ENCODE measurements at regions of chr6 and their contacts with region 1.

Region 1: DNA sequence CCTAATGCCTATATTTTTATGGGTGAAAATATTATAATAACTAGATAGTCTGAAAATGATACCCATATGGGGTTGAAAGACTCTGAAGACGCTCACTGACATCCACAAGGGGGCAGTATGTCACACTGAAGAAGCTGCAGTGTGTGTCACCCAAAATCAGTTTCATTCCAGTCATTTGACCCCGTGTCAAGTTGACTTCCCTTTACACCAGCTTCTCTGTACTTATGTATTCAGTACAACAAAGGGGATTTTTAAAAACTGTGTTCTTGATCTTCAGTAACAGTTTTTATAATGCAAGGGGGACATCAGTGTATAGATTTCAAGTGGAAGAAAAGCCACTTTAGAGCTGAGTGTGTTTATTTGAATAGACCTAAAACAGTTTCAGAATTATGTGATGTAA is 19.3 kb downstream of the FAXC start:
- DNase-seq: peak; percentile 84
- H3K4me3 Mint-ChIP-seq: no peak overlapping the region
- H3K27ac Mint-ChIP-seq: no peak overlapping the region
- H3K4me1 Mint-ChIP-seq: peaks cover 4% of the 10 kb centered on the region
- H3K27me3 Mint-ChIP-seq: peaks cover 7% of the 10 kb centered on the region

Region 2: DNA sequence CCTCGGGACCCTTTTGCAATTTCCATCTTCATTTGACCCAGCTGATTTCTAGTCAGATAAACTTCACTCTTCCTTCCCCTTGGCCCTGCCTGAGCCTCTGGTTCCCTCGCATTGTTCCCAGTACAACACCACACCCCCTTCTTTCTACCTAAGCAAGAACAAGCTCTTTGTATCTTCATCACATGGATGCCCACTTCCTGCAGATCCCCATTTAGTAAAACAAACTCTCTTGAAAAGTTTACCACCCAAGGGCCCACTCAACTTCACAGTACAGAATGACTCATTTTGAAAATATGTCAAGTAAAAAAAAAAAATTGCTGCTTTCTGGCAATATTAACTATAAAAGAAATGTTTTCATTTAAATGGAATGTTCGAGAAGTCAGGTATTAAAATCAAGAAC is 14.1 kb after region 1 on chr6:
- CTCF ChIA-PET with region 1: interaction called, 10 read pairs
- intact Hi-C with region 1: no loop called
- DNase-seq: no peak
- H3K4me3 Mint-ChIP-seq: no peak overlapping the region
- H3K27ac Mint-ChIP-seq: no peak overlapping the region
- H3K4me1 Mint-ChIP-seq: peaks cover 3% of the 10 kb centered on the region
- H3K27me3 Mint-ChIP-seq: peaks cover 36% of the 10 kb centered on the region

Region 3: DNA sequence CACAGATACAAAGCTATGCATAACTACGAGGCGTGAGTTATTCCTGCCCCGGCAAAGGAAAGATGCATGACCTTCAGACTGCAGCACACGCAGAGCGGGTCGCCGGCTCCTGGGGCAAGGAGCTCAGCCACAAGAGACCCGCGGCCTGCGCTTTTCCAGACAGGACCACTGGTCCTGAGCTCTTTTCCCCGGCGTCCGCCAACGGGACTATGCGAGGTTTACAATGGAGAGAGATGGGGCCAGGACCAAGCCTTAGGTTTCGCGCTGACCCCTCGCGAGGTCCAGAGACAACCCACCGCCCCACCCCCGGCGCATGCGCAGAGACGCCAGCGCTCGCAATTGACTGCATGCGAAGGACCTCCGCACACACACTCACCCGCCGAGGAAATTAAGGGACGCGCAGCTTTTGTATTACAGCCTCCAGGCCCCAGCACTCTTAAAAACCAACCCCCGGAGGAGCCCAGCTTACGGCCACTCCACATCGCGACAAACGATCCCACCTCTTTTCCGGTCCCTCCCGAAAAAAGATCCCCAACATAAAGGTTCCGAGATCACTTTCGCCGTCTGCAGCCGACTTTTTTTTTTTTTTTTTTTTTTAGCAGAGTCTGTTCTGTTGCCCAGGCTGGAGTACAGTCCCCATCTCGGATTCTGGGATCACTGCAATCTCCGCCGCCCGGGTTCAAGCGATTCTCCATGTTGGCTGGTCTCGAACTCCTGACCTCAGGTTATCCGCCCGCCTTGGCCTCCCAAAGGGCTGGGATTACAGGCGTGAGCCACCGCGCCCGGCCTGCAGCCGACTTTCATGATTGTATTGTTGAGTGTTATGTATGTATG is 63.8 kb after region 1 on chr6 and contains the start of gene COQ3:
- CTCF ChIA-PET with region 1: interaction called, 10 read pairs
- intact Hi-C with region 1: loop called (anchors 1 kb)
- DNase-seq: peak; percentile 66
- H3K4me3 Mint-ChIP-seq: peak within 1 kb of the TSS; percentile 91
- H3K27ac Mint-ChIP-seq: peak within 1 kb of the TSS; percentile 91
- H3K4me1 Mint-ChIP-seq: peaks cover 13% of the 10 kb centered on the region
- H3K27me3 Mint-ChIP-seq: no peaks in the 10 kb centered on the region
- total RNA-seq, gene COQ3: 17.4 to 17.7 TPM

Region 4: DNA sequence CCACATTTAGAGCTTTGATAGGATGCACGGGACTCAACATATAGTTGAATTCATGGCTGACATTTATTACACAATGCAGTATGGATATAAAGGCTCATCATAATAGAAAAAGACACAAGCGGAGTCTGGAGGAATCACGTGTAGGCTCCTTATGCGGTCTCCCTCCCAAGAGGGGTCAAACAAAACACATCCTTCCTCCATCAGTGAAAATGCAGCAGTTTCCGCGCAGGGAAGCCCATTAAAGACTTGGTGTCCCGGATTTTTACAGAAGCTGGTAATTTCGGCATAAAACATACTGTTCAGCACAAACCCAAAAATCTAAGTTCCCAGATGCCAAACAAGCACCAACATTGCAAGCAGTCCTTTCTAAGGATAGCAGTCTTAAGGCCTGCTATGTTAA is 183.9 kb after region 1 on chr6:
- CTCF ChIA-PET with region 1: no interaction called
- intact Hi-C with region 1: loop called (anchors 1 kb)
- DNase-seq: no peak
- H3K4me3 Mint-ChIP-seq: peak overlapping the region; percentile 93
- H3K27ac Mint-ChIP-seq: no peak overlapping the region
- H3K4me1 Mint-ChIP-seq: peaks cover 27% of the 10 kb centered on the region
- H3K27me3 Mint-ChIP-seq: no peaks in the 10 kb centered on the region

Region 5: GRCh38 chr6:99746261-99746895 is 416.2 kb after region 1 on chr6:
- CTCF ChIA-PET with region 1: interaction called, 4 read pairs
- intact Hi-C with region 1: loop called (anchors 1 kb)
- DNase-seq: peak; percentile 69
- H3K4me3 Mint-ChIP-seq: no peak overlapping the region
- H3K27ac Mint-ChIP-seq: no peak overlapping the region
- H3K4me1 Mint-ChIP-seq: no peaks in the 10 kb centered on the region
- H3K27me3 Mint-ChIP-seq: peaks cover 28% of the 10 kb centered on the region

Measured in activated naive CD4-positive, alpha-beta T cell treated with anti-CD3 and anti-CD28 coated beads for 36 hours (primary cell).